HepG2 (cell line): ENCODE measurements at regions of chr4 and their contacts with region 1.

Region 1: DNA sequence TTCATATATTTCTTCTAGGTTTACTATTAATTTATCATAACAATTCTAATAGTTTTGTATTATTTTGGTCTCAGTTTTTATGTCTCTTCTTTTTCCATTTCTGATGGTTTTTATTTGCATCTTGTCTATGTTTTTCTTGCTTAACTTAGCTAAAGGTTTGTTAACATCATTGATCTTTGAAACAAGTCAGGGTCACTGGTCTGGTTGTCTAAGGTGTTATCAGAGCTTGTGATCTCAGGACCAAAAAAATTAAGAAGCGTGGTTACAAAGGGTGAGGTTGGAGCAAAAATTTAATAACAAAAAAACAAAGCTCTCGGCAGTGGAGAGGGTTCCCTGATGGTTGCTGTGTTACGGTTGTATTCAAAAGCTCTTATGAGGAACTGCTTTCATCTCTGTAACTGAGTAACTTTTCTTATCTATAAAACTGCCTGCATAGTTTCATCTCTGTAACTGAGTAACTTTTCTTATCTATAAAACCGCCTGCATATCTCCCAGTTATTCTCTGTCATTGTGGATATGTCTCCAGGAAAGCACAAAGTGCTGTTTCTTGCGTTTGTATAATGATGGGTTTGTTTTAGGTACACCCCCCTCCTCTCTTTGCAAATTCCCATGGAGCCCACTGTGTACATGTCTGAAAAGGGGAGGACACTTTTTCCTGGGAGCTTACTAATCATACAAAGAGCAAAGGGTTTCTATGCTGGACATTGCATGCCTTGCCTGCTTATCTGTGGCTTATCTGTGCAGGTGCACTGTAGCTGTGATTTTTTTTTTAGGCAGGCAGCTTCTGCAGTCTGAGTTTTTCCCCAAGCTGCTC is 62.4 kb upstream of the UGT2B15 start:
- DNase-seq: peak; percentile 100
- ATAC-seq: peak; percentile 97
- H3K4me3 ChIP-seq: no peak overlapping the region
- H3K27ac ChIP-seq: peak overlapping the region; percentile 93
- H3K4me1 ChIP-seq: peaks cover 72% of the 10 kb centered on the region
- H3K27me3 ChIP-seq: no peaks in the 10 kb centered on the region
- CTCF ChIP-seq: no peak
- EP300 ChIP-seq: peak; percentile 69 to 97; a peak in 2 of 4 replicates
- POLR2A ChIP-seq: no peak
- RAD21 ChIP-seq: peak; percentile 69

Region 2: DNA sequence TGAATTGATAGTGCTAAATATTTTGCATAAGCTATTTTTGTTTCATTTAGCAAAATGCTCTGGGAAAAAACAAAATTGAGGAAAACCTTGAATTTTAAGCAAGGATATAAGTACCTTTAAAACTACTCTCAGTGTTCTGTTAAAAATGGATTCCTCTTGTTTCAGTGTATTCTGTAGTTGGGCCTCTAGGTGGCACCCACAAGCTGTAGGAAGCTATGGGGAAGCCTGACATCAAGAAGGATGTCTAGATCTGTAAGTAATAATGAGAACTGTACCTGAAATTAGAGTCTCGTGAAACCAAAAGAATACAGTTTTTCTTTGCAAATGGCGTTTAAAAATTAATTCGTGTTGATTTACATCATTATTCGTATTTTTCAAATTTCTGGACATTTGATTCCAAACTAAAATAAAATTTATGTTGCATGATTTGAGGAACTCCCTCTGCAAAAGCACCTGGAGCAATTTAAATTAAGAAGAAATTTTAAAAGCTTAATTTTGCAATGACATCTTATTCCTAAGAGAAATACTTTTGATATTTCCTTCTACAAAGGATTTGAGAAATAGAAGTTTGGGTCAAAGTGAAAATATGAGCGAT is 234.3 kb before region 1 on chr4:
- CTCF ChIA-PET with region 1: interaction called, 3 read pairs
- POLR2A ChIA-PET with region 1: no interaction called
- in situ Hi-C with region 1: no loop called
- intact Hi-C with region 1: loop called (anchors 1 kb)
- DNase-seq: peak; percentile 78
- ATAC-seq: peak; percentile 78
- H3K4me3 ChIP-seq: no peak overlapping the region
- H3K27ac ChIP-seq: no peak overlapping the region
- H3K4me1 ChIP-seq: peaks cover 21% of the 10 kb centered on the region
- H3K27me3 ChIP-seq: no peaks in the 10 kb centered on the region
- CTCF ChIP-seq: peak; percentile 88
- EP300 ChIP-seq: peak in 1 of 2 experiments; percentile 25; a peak in 1 of 4 replicates
- POLR2A ChIP-seq: no peak
- RAD21 ChIP-seq: peak; percentile 92

Region 3: GRCh38 chr4:68745472-68745812 is 12.6 kb after region 1 on chr4:
- CTCF ChIA-PET with region 1: no interaction called
- POLR2A ChIA-PET with region 1: interaction called, 12 read pairs
- in situ Hi-C with region 1: no loop called
- intact Hi-C with region 1: no loop called
- DNase-seq: no peak
- ATAC-seq: peak; percentile 31; the same call in 1 of the 3 replicates
- H3K4me3 ChIP-seq: no peak overlapping the region; a peak in 1 of 6 replicates
- H3K27ac ChIP-seq: peak overlapping the region; percentile 56
- H3K4me1 ChIP-seq: peaks cover 28% of the 10 kb centered on the region
- H3K27me3 ChIP-seq: no peaks in the 10 kb centered on the region
- CTCF ChIP-seq: no peak
- EP300 ChIP-seq: no peak
- POLR2A ChIP-seq: no peak
- RAD21 ChIP-seq: no peak

Region 4: DNA sequence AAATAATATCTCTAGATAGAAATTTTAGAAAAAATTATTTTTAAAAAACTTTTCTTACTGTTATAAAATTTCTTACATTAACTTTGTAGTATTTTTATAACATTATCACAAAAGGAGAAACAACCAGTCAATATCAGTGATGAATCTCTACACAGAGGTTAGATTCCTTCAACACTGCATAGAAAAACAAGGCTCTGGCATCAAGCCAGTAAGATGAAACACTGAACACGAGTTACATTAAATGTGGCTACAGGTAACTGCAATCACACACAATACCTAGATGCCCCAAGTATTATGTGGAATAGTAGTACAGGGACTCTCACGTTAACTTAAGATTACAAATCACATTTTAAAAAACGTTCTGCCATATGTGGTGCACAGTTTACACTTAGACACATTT is 87.9 kb after region 1 on chr4:
- CTCF ChIA-PET with region 1: no interaction called
- POLR2A ChIA-PET with region 1: interaction called, 43 read pairs
- in situ Hi-C with region 1: loop called (anchors 10 kb)
- intact Hi-C with region 1: loop called (anchors 2 kb)
- DNase-seq: no peak
- ATAC-seq: no peak
- H3K4me3 ChIP-seq: no peak overlapping the region
- H3K27ac ChIP-seq: no peak overlapping the region
- H3K4me1 ChIP-seq: peaks cover 77% of the 10 kb centered on the region
- H3K27me3 ChIP-seq: no peaks in the 10 kb centered on the region
- CTCF ChIP-seq: no peak
- EP300 ChIP-seq: no peak
- POLR2A ChIP-seq: no peak
- RAD21 ChIP-seq: no peak

Region 5: GRCh38 chr4:68871809-68872642 is 139.2 kb after region 1 on chr4:
- CTCF ChIA-PET with region 1: no interaction called
- POLR2A ChIA-PET with region 1: interaction called, 27 read pairs
- in situ Hi-C with region 1: no loop called
- intact Hi-C with region 1: loop called (anchors 2 kb)
- DNase-seq: peak; percentile 91
- ATAC-seq: peak; percentile 92
- H3K4me3 ChIP-seq: peak overlapping the region in 2 of 3 experiments; percentile 47 to 55; a peak in 3 of 6 replicates
- H3K27ac ChIP-seq: peak overlapping the region; percentile 85
- H3K4me1 ChIP-seq: peaks cover 59% of the 10 kb centered on the region
- H3K27me3 ChIP-seq: no peaks in the 10 kb centered on the region
- CTCF ChIP-seq: no peak
- EP300 ChIP-seq: peak in 1 of 2 experiments; percentile 90; a peak in 2 of 4 replicates
- POLR2A ChIP-seq: no peak; a peak in 1 of 4 replicates
- RAD21 ChIP-seq: peak; percentile 11; the same call in 1 of the 2 replicates

Region 6: GRCh38 chr4:69057620-69058409 is 325.0 kb after region 1 on chr4:
- CTCF ChIA-PET with region 1: no interaction called
- POLR2A ChIA-PET with region 1: interaction called, 10 read pairs
- in situ Hi-C with region 1: no loop called
- intact Hi-C with region 1: loop called (anchors 2 kb)
- DNase-seq: peak; percentile 93
- ATAC-seq: peak; percentile 87
- H3K4me3 ChIP-seq: peak overlapping the region; percentile 11 to 43 (median 31); a peak in 5 of 6 replicates
- H3K27ac ChIP-seq: peak overlapping the region; percentile 88
- H3K4me1 ChIP-seq: peaks cover 78% of the 10 kb centered on the region
- H3K27me3 ChIP-seq: no peaks in the 10 kb centered on the region
- CTCF ChIP-seq: no peak
- EP300 ChIP-seq: peak in 1 of 2 experiments; percentile 71; a peak in 1 of 4 replicates
- POLR2A ChIP-seq: peak; percentile 14 to 38
- RAD21 ChIP-seq: no peak

Region 7: GRCh38 chr4:69167300-69167699 is 434.4 kb after region 1 on chr4:
- CTCF ChIA-PET with region 1: no interaction called
- POLR2A ChIA-PET with region 1: no interaction called
- in situ Hi-C with region 1: no loop called
- intact Hi-C with region 1: loop called (anchors 5 kb)
- DNase-seq: no peak
- ATAC-seq: no peak
- H3K4me3 ChIP-seq: no peak overlapping the region
- H3K27ac ChIP-seq: no peak overlapping the region
- H3K4me1 ChIP-seq: peaks cover 41% of the 10 kb centered on the region
- H3K27me3 ChIP-seq: no peaks in the 10 kb centered on the region
- CTCF ChIP-seq: no peak
- EP300 ChIP-seq: no peak
- POLR2A ChIP-seq: no peak
- RAD21 ChIP-seq: no peak

Region 8: DNA sequence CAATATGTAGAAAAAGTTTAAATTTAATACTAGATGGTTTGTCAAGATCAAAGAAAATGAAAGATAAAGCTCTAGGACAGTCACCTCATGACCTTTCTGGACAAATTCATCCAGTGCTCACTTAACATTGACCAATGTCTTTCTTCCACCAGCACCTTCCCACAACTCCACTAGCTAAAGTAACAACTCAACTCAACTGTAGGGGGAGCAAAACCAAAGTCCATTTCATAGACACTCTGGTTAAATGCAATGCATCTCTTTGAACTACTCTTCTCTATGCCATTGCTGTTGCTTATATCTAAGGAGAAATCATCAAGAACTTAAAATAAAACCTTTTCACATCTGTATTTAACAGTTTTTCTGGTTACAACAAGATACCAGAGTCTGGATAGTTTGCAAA is 737.7 kb after region 1 on chr4:
- CTCF ChIA-PET with region 1: no interaction called
- POLR2A ChIA-PET with region 1: no interaction called
- in situ Hi-C with region 1: no loop called
- intact Hi-C with region 1: no loop called
- DNase-seq: no peak
- ATAC-seq: peak; percentile 76
- H3K4me3 ChIP-seq: no peak overlapping the region
- H3K27ac ChIP-seq: no peak overlapping the region
- H3K4me1 ChIP-seq: peaks cover 12% of the 10 kb centered on the region; the same call in 1 of the 2 replicates
- H3K27me3 ChIP-seq: no peaks in the 10 kb centered on the region
- CTCF ChIP-seq: peak; percentile 48
- EP300 ChIP-seq: no peak
- POLR2A ChIP-seq: no peak
- RAD21 ChIP-seq: no peak